ENCODE measurements at regions of chr3 and their contacts with region 1.

Region 1: GRCh38 chr3:62665598-62666437 is 209.4 kb downstream of the CADPS start:
- DNase-seq: peak; percentile 41
- H3K4me3 ChIP-seq: no peak overlapping the region
- H3K27ac ChIP-seq: no peak overlapping the region
- H3K4me1 ChIP-seq: no peaks in the 10 kb centered on the region
- H3K27me3 ChIP-seq: no peaks in the 10 kb centered on the region
- CTCF ChIP-seq: peak in 3 of 4 experiments; percentile 46 to 66 (median 48)
- POLR2A ChIP-seq: no peak

Region 2: DNA sequence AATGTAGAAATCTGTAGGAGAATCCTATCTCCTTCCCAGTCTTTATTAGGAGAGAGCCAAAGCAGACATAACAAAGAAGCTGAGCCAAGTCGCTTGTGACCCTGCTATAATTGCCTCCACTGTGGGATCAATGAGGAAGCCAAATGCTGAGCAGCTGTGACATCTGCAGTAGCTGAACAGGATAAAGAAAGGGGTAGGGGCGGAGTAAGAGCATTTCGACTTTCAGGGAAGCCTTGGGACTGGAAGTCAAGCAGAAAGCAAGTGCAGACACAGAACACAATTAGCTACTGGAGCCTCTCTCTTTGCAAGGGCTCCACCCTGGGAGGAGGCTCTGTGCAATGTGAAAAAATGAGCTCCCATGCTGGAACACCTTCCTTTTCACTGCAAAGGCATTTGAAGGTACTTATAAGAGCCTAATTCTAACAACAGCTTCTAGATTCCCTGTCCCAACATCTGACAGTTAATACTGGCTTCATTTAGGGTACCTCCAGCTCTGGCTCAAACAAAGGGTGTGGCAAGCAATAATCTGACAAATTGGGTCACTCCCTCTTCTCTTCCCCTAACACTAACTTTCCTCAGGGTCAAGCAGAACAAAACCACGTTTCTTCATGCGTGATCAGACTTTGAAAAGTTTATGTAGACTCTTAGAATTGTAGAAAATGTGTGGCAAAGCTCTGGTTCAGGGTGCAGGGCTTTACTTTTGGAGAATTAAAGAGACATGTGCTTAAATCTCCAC is 43.0 kb after region 1 on chr3:
- intact Hi-C with region 1: no loop called
- DNase-seq: no peak
- H3K4me3 ChIP-seq: no peak overlapping the region
- H3K27ac ChIP-seq: no peak overlapping the region
- H3K4me1 ChIP-seq: no peaks in the 10 kb centered on the region
- H3K27me3 ChIP-seq: no peaks in the 10 kb centered on the region
- CTCF ChIP-seq: no peak
- POLR2A ChIP-seq: no peak

Region 3: DNA sequence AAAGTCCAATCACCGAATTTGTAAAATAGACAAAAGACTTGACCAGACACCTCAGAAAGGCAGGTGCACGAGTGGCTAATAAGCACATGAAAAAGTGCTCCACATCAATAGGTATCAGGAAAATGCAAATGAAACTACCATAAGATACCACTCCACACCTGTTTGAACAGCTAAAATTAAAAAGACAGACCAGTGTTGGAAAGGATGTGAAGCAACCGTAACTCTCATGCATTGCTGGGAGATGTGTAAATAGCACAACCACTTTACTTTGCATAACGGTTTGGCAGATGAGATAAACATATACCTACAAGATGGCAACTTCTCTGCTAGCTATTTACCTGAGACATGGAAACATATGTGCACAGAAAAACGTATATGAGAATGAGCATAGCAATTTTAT is 152.5 kb after region 1 on chr3:
- intact Hi-C with region 1: no loop called
- DNase-seq: no peak
- H3K4me3 ChIP-seq: no peak overlapping the region
- H3K27ac ChIP-seq: no peak overlapping the region
- H3K4me1 ChIP-seq: no peaks in the 10 kb centered on the region
- H3K27me3 ChIP-seq: no peaks in the 10 kb centered on the region
- CTCF ChIP-seq: no peak
- POLR2A ChIP-seq: no peak

Region 4: DNA sequence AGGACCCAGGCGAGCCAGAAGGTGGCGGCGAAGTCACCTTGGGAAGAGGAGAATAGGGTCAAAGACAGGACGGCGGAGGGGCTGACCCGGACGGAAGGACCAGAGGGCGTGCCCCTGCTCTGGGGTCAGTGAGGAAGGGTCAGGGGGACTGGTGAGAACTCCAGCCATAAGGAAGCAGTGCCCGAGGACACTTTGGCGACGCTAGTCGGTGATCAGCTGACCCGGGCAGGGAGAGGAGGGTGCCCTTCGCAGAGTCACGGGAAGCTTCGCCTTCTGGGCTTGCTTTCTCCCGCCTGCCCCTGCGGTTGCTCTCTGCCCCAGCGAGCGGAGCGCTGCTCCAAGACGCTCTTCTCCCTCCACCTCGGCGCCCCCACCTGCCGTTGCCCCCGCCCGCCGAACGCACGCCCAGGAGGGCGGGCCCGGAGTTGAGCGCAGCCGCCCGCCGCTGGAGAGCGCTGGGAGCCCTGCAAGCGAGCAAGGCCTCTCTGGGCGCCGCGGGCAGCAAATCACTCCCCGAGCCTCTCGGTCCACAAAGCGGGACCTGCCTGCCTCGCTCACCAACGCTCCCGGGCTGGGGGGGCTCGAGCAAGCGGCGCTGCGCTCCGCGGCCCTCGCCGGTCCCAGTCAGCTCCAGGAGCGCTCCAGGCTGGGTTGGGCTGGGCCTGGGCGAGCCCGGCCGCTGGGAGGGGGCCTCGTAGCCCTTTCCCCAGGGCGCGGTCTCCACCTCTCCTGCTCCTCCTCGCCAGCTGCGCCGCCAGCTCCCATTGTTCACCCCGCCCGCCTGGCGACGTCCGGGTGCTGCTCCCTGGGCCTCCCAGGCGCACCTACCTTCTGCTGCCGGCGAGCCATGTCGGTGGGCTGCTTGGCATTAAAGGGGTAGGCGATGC is 208.2 kb after region 1 on chr3:
- intact Hi-C with region 1: loop called (anchors 10 kb)
- DNase-seq: peak; percentile 24
- H3K4me3 ChIP-seq: peak overlapping the region; percentile 37 to 45
- H3K27ac ChIP-seq: peak overlapping the region in 1 of 2 donors; percentile 54
- H3K4me1 ChIP-seq: no peaks in the 10 kb centered on the region
- H3K27me3 ChIP-seq: peaks cover 3% of the 10 kb centered on the region
- CTCF ChIP-seq: peak in 1 of 4 experiments; percentile 1
- POLR2A ChIP-seq: no peak

Region 5: GRCh38 chr3:63193629-63194028 is 527.8 kb after region 1 on chr3:
- intact Hi-C with region 1: loop called (anchors 5 kb)
- DNase-seq: no peak
- H3K4me3 ChIP-seq: no peak overlapping the region
- H3K27ac ChIP-seq: no peak overlapping the region
- H3K4me1 ChIP-seq: no peaks in the 10 kb centered on the region
- H3K27me3 ChIP-seq: no peaks in the 10 kb centered on the region
- CTCF ChIP-seq: peak in 2 of 4 experiments; percentile 14 to 47
- POLR2A ChIP-seq: no peak

Region 6: DNA sequence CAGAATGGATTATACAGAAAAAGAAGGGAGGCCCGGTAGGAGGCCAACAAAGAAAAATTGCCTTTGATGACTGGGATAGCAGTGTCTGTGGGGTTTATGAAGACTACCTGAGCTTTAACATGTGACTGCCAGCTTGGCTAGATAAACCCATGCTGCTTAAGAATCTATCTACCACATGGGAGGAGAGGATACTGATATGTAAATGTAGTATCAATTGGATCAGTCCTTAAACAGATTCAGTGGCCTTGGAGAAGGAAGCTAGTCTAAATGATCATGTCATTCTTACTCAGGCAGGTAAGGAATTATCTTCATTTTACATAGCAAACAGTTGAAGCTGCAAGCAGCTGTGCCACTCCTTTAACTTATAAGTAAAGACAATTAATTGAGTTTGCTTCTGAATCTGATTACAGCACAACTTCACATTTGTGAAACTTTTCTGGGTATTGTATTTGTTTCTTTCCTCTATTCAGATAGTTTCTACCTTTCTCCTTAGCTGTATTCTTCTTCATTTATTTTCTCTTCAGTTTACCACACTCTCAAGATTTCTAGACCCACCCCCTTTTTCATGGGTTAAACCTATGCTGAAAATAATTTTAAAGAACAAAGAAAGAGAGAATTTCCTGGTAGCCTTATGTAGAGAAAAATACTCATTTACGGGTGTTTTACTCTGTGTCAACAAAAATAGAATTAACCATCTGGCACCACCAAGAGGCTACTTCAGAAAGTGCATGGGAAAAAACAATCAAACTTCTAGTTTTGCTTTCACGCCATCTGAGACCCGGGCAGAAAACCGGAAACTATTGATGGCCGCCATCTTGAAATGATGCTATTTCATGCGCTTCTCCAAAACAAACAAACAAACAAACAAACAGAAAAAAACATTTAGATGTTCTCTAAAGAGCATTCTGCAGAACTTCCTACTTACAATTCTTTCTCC is 562.5 kb after region 1 on chr3:
- intact Hi-C with region 1: loop called (anchors 10 kb)
- DNase-seq: no peak
- H3K4me3 ChIP-seq: no peak overlapping the region
- H3K27ac ChIP-seq: no peak overlapping the region
- H3K4me1 ChIP-seq: no peaks in the 10 kb centered on the region
- H3K27me3 ChIP-seq: no peaks in the 10 kb centered on the region
- CTCF ChIP-seq: peak; percentile 18 to 57 (median 38)
- POLR2A ChIP-seq: no peak